Posterior cingulate gyrus (tissue), 11 donors: ENCODE measurements at regions of chr1 and their contacts with region 1.

Region 1: DNA sequence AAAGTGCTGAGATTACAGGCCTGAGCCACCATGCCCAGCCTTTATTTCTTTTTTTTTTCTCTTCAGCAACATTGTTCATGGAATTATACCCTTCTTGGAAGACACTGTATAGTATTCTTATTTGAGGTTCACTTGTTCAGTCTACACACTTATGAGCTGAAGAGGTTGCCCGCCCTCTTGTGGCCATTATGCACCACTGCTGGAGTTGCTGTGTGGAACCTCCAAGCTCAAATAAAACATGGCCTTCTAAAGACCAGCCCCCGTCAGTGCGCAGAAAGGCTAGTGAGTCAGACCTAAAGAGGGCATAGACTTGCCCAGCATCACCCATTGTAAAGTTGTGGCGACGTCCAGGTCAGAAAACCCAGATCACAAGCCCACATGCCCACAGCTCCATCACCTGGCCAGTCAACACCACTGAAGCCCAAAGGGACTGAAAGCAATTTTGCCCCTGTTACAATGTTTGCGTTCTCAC is 20.4 kb downstream of the LURAP1 start:
- DNase-seq: peak; percentile 55 to 97 (median 76)

Region 2: GRCh38 chr1:45913183-45913683 is 310.3 kb before region 1 on chr1:
- intact Hi-C with region 1: no loop called
- DNase-seq: no peak

Region 3: DNA sequence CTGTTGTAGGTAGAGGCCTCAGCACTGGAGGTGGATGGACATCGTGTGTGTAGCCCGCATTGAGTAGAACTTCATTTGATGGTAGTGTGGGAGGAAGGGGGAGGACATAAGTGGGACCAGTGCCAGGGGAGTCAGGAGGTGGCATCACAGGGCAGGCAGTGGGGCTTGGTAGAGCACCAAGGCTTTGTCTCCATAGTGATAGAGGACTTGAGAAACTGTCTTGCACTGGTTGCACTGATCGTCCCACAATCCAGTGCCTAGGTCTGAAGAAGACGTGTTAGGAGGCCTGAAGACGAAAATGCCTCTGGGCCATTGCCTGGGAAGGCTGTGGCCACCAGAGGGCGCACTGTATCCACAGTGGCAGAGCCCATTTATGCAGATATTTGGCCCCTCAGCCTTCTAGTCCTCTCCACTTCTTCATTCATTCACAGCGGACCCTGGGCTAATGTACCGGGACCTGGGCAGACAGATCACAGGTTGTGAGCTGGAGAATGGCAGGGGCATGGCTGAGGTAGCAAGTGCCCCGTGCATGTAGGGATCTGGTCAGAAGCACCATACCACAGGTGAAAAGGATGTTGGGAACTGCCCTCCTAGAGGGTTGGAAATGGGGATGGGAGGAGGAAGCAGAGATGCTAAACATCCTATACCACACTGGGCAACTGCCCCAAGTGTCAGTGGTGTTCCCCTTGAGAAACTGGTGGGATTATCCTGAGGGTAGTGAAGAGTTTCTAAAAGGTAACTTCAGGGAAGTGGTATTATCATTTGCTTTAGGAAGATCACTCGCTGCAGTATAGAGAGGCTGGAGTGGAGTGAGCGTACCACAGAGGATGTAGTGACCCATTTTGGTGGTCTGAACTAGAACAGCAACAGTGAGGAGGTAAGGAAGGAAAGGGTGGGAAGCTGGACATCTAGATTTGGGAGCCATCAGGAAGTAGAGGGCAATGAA is 186.3 kb before region 1 on chr1:
- intact Hi-C with region 1: loop called (anchors 1 kb)
- DNase-seq: peak; percentile 74 to 98 (median 90)

Region 4: GRCh38 chr1:46179138-46180081 is 44.1 kb before region 1 on chr1:
- intact Hi-C with region 1: loop called (anchors 1 kb)
- DNase-seq: peak in 9 of 10 donors; percentile 43 to 96 (median 84)

Region 5: GRCh38 chr1:46197964-46198811 is 25.3 kb before region 1 on chr1 and contains the start of gene POMGNT1:
- intact Hi-C with region 1: loop called (anchors 2 kb)
- DNase-seq: peak; percentile 48 to 95 (median 68)

Region 6: GRCh38 chr1:46254668-46255067 is 31.2 kb after region 1 on chr1:
- intact Hi-C with region 1: no loop called
- DNase-seq: no peak

Region 7: GRCh38 chr1:46309401-46310159 is 86.1 kb after region 1 on chr1:
- intact Hi-C with region 1: no loop called
- DNase-seq: peak in 2 of 10 donors; percentile 13 to 34